ENCODE measurements at regions of chr11 and their contacts with region 1.

Region 1: GRCh38 chr11:87421422-87421821 is 383.7 kb downstream of the TMEM135 start:
- DNase-seq: peak; percentile 76 to 86 (median 79)
- H3K4me3 ChIP-seq: no peak overlapping the region
- H3K27ac ChIP-seq: no peak overlapping the region
- H3K4me1 ChIP-seq: no peaks in the 10 kb centered on the region
- H3K27me3 ChIP-seq: no peaks in the 10 kb centered on the region

Region 2: DNA sequence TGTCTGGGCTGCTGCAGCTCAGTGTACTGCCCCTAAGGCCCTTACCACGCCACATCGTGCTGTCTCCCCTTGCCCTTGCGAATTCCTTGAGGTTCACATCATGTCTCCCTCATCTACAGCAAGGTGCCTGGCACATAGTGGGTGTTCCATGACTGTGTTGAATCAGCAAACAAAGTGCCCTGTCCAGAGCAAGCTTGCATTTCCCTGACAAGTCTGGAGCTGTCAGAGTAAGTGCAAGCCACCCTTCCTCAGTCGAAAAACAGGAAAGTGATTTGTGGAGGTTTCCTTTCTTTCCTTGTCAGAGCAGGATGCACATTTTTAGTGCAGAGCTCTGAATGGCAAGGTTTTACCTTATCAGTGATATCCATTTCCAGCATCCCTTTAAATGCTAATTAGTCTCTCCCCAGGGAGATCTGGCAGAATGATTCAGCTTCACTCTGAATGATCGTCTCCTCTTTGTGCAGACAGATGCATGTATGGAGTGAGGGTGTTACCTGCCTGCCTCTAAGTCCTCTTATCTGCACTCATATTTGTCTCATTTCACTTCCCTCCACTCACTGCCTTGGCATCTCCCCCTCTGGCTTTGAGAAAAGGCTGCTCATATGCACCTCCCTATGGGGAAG is 52.5 kb before region 1 on chr11:
- CTCF ChIA-PET with region 1: interaction called, 15 read pairs
- POLR2A ChIA-PET with region 1: no interaction called
- DNase-seq: peak; percentile 52 to 90 (median 81)
- H3K4me3 ChIP-seq: no peak overlapping the region
- H3K27ac ChIP-seq: peak overlapping the region in 1 of 2 experiments; percentile 36
- H3K4me1 ChIP-seq: peaks cover 4 to 33% (median 14%) of the 10 kb centered on the region in 4 experiments
- H3K27me3 ChIP-seq: no peaks in the 10 kb centered on the region

Region 3: GRCh38 chr11:87384078-87384729 is 37.2 kb before region 1 on chr11:
- CTCF ChIA-PET with region 1: no interaction called
- POLR2A ChIA-PET with region 1: no interaction called
- DNase-seq: no peak
- H3K4me3 ChIP-seq: no peak overlapping the region
- H3K27ac ChIP-seq: no peak overlapping the region
- H3K4me1 ChIP-seq: no peaks in the 10 kb centered on the region
- H3K27me3 ChIP-seq: no peaks in the 10 kb centered on the region

Region 4: DNA sequence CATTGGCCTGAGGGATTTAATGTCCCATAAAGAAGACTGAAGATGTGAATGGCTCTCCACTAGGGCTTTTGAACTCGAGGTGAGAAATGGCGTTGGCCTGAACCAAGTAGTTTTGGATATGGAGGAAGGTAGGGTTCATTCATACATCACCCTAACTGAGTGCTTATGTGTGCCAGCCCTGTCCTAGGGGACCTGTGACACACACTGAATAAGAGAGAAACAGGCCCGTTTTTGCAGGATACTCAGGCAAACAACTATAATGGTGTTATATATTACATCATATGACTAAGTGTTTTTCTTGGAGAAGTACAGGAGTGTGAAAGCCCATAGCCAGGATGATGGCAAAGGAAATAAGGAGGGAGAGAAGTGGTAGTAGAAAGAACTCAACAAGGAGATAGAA is 15.6 kb before region 1 on chr11:
- CTCF ChIA-PET with region 1: interaction called, 22 read pairs
- POLR2A ChIA-PET with region 1: no interaction called
- DNase-seq: no peak
- H3K4me3 ChIP-seq: no peak overlapping the region
- H3K27ac ChIP-seq: no peak overlapping the region
- H3K4me1 ChIP-seq: peaks cover 0 to 8% (median 0%) of the 10 kb centered on the region in 4 experiments
- H3K27me3 ChIP-seq: no peaks in the 10 kb centered on the region

Region 5: DNA sequence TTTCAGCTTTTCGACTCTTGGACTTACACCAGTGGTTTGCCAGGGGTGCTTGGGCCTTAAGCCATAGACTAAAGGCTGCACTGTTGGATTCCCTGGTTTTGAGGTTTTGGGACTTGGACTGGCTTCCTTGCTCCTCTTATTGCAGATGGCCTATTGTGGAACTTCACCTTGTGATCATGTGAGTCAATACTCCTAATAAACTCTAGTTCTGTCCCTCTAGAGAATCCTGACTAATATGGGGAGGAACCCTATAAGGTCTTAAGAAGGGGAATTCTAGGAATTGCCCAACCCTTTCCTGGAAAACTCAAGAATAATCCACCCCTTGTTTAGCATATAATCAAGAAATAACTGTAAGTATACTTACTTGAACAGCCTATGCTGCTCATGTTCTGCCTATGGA is 108.1 kb after region 1 on chr11:
- CTCF ChIA-PET with region 1: no interaction called
- POLR2A ChIA-PET with region 1: no interaction called
- DNase-seq: no peak
- H3K4me3 ChIP-seq: no peak overlapping the region
- H3K27ac ChIP-seq: no peak overlapping the region
- H3K4me1 ChIP-seq: peaks cover 0 to 3% (median 0%) of the 10 kb centered on the region in 4 experiments
- H3K27me3 ChIP-seq: no peaks in the 10 kb centered on the region

Measured in common myeloid progenitor, CD34-positive (primary cell).